ENCODE measurements at regions of chr18 and their contacts with region 1.

Region 1: GRCh38 chr18:79133724-79134123 is 64.5 kb downstream of the ATP9B start:
- DNase-seq: no peak
- ATAC-seq: no peak
- H3K4me3 ChIP-seq: no peak overlapping the region
- H3K4me3 Mint-ChIP-seq: no peak overlapping the region
- H3K27ac ChIP-seq: no peak overlapping the region
- H3K27ac Mint-ChIP-seq: no peak overlapping the region
- H3K4me1 ChIP-seq: peaks cover under 1% of the 10 kb centered on the region
- H3K4me1 Mint-ChIP-seq: peaks cover 9% of the 10 kb centered on the region
- H3K27me3 ChIP-seq: no peaks in the 10 kb centered on the region
- H3K27me3 Mint-ChIP-seq: no peaks in the 10 kb centered on the region
- CTCF ChIP-seq: no peak

Region 2: GRCh38 chr18:79077181-79077580 is 56.5 kb before region 1 on chr18:
- CTCF ChIA-PET with region 1: no interaction called
- POLR2A ChIA-PET with region 1: no interaction called
- intact Hi-C with region 1: loop called in 1 of 2 experiments (anchors 5 kb)
- DNase-seq: no peak
- ATAC-seq: no peak
- H3K4me3 ChIP-seq: no peak overlapping the region
- H3K4me3 Mint-ChIP-seq: no peak overlapping the region
- H3K27ac ChIP-seq: no peak overlapping the region
- H3K27ac Mint-ChIP-seq: no peak overlapping the region
- H3K4me1 ChIP-seq: peaks cover 12% of the 10 kb centered on the region
- H3K4me1 Mint-ChIP-seq: peaks cover 75% of the 10 kb centered on the region
- H3K27me3 ChIP-seq: no peaks in the 10 kb centered on the region
- H3K27me3 Mint-ChIP-seq: no peaks in the 10 kb centered on the region
- CTCF ChIP-seq: no peak